CD4-positive, alpha-beta T cell (primary cell): ENCODE measurements at regions of chr3 and their contacts with region 1.

Region 1: DNA sequence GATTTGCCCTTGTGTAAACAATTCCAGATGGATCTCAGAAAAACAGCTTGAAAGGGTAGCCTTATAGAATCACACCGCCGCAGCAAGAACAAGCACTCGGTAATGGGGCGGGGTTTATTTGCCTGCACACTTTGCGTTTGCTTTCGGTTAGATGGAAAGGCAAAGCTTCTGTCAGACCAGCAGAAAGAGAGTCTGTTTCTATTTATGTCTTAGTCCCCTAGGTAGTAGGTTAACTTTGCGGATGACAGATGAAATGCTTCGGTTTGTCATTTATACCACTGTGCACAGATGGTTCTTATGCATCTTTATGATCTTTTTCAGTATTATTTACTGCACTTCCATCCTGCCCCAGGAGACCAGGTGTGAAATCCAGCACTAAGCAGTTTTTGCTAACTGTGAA is 62.2 kb downstream of the PYDC2 start:
- DNase-seq: no peak
- ATAC-seq: no peak
- H3K4me3 ChIP-seq: no peak overlapping the region
- H3K4me3 Mint-ChIP-seq: no peak overlapping the region
- H3K27ac ChIP-seq: no peak overlapping the region
- H3K27ac Mint-ChIP-seq: no peak overlapping the region
- H3K4me1 ChIP-seq: no peaks in the 10 kb centered on the region
- H3K4me1 Mint-ChIP-seq: no peaks in the 10 kb centered on the region
- H3K27me3 ChIP-seq: no peaks in the 10 kb centered on the region
- H3K27me3 Mint-ChIP-seq: no peaks in the 10 kb centered on the region
- CTCF ChIP-seq: no peak

Region 2: GRCh38 chr3:191509078-191509477 is 14.1 kb before region 1 on chr3:
- CTCF ChIA-PET with region 1: interaction called, 11 read pairs
- POLR2A ChIA-PET with region 1: interaction called, 3 read pairs
- intact Hi-C with region 1: no loop called
- DNase-seq: no peak
- ATAC-seq: no peak
- H3K4me3 ChIP-seq: no peak overlapping the region
- H3K4me3 Mint-ChIP-seq: no peak overlapping the region
- H3K27ac ChIP-seq: no peak overlapping the region
- H3K27ac Mint-ChIP-seq: no peak overlapping the region
- H3K4me1 ChIP-seq: no peaks in the 10 kb centered on the region
- H3K4me1 Mint-ChIP-seq: no peaks in the 10 kb centered on the region
- H3K27me3 ChIP-seq: no peaks in the 10 kb centered on the region
- H3K27me3 Mint-ChIP-seq: no peaks in the 10 kb centered on the region
- CTCF ChIP-seq: no peak